ENCODE measurements at regions of chr10 and their contacts with region 1.

Region 1: DNA sequence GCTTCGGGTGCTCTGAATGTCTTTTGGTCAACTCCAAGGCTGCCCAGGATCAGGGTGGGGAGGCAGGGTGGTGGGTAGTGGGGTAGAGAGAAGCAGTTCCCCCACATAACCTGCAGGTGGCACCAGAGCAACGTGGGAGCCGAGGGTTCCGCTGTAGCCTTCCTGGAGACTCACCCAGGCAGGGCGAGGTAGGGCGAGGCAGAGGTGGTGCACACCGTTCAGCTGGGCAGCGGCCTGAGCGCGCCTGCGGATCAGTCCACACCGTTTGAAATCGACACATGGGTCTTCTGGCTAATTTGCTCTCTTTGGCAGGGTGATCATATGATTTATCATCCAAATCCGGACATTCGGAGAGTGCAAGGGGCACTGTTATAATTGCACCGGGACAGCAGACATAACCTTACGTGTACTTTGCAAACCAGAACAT is 41.4 kb upstream of the MAP3K8 start:
- DNase-seq: peak in 9 of 10 donors; percentile 48 to 94 (median 74)

Region 2: DNA sequence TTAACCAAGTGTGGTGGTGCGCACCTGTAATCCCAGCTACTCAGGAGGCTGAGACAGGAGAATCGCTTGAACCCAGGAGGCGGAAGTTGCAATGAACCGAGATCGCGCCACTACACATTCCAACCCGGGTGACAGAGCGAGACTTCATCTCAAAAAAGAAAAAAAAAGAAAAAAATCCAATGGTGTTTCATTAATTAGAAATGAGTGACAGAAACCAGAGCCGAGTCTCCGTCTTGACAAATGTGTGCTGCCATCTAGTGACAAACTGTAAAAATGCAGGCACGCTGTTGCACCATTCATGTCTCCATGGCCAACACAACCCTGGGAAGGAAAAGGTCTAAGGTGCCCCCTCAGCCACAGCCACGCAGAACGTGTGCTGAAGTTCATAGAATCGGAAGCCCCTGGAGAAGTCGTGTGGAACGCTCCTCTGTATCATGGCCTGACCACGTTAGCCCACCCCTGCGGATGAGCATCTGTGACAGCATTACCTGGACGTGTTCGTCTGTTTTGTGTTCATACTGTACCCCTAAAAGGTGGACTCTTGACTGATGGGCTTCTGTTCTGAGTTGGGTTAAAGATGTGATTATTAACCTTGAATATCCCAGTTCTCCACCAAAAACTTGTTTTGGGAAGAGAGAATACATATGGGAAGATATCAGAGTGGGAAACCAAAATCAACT is 142.0 kb after region 1 on chr10:
- intact Hi-C with region 1: loop called (anchors 1 kb)
- DNase-seq: peak in 9 of 10 donors; percentile 12 to 91 (median 66)

Region 3: DNA sequence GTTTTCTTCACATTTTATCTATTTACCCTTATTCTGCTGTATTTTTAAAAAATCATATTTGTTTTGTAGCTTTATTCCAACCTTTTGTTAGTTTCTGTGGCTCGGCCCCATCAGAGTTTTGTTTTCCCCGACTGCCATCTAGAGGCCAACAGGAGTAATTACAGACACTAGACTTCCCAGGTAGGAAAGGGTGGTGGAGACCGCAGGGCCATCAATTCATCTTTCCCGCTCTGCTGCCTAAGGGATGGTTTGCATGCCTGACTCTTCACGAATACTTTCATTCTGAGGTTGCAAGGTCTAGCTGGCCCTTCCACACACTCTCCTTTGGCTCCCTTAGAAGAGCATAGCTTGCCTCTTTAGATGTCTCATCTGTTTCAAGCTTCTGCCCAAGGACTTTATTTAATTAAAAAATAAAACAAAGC is 198.7 kb after region 1 on chr10:
- intact Hi-C with region 1: loop called (anchors 1 kb)
- DNase-seq: peak in 2 of 10 donors; percentile 22 to 34